Activated CD8-positive, alpha-beta T cell treated with anti-CD3 and anti-CD28 coated beads for 36 hours (primary cell): ENCODE measurements at regions of chr17 and their contacts with region 1.

Region 1: GRCh38 chr17:27879987-27880608 is 13.1 kb downstream of the LYRM9 start:
- DNase-seq: peak; percentile 83
- ATAC-seq: peak; percentile 87
- H3K4me3 Mint-ChIP-seq: no peak overlapping the region
- H3K27ac Mint-ChIP-seq: peak overlapping the region; percentile 55
- H3K4me1 Mint-ChIP-seq: peaks cover 19% of the 10 kb centered on the region
- H3K27me3 Mint-ChIP-seq: no peaks in the 10 kb centered on the region
- CTCF ChIP-seq: peak; percentile 86

Region 2: DNA sequence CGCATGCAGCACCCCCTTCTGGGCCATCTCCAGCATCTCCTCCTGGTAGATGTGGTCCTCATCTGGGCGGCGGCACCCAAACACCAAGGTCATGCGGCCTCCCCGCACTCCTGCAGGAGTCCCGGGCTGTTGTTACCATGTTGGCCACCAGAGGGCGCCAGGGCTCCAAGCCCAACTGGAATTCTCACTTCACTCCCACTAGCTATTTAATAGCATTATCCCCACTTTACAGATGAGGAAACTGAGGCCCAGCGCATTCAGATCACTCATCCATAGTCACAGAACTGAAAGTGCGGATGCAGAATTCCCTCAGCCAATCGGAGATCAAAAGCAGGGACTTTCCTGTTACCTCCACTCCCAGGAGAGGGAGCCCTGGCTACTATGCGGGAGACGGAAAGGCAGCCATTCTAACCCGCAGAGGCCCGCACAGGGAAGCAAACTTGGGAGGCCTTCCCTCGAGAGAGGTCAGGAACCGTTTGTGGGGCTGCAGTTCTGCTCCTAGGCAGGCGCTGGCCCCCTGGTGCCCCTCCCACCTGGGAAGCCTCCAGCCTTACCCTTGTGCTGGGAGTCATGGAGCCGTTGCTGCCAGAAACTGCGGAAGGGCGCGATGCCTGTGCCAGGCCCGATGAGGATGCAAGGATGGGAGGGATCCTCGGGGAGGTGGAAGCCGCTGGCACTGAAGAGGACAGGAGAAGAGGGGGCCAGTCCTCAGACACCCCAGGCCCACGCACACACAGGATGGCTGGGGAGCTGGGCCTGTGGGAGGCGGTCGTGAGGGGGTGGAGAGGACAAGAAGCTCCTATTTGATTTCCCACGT is 119.8 kb before region 1 on chr17:
- CTCF ChIA-PET with region 1: interaction called, 105 read pairs
- POLR2A ChIA-PET with region 1: no interaction called
- intact Hi-C with region 1: loop called (anchors 2 kb)
- DNase-seq: peak; percentile 82
- ATAC-seq: peak; percentile 68
- H3K4me3 Mint-ChIP-seq: no peak overlapping the region
- H3K27ac Mint-ChIP-seq: no peak overlapping the region
- H3K4me1 Mint-ChIP-seq: no peaks in the 10 kb centered on the region
- H3K27me3 Mint-ChIP-seq: no peaks in the 10 kb centered on the region
- CTCF ChIP-seq: peak; percentile 94

Region 3: DNA sequence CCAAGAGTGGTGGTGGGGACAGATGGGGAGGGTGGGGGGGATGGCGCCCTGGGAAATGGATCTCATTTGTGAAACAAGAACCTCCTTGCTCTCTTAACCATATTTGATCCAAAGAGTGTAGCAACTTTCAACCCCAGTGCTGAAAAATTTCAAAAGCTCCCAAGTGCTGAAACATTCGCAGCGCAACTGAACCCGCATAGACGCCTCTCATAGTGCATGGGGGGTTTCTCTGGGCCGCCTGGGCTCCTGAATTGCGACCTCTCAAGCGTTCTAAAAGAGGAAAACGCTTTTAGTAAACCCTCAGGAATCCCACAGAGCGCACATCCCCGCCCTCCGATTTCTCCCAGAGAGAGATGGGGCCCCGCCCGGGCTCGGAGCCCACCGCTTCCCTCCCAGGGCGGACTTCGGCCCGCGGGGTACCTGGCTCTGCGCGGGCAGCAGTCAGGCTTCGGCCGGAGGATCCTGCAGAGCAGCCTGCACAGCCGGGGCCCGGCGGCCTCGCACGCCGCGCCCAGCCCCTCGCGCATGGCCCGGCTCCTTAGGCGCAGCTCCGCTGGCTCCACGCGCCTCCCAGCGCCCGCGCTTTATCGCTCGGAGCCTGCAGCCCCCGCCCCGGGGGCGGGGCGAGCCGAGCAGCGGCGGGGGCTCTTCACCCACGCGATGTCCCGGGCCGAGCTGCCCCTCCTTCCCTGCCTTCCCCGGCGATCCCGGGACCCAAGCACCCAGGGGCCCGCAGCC is 86.8 kb before region 1 on chr17:
- CTCF ChIA-PET with region 1: interaction called, 601 read pairs
- POLR2A ChIA-PET with region 1: no interaction called
- intact Hi-C with region 1: no loop called
- DNase-seq: no peak
- ATAC-seq: peak; percentile 47
- H3K4me3 Mint-ChIP-seq: no peak overlapping the region
- H3K27ac Mint-ChIP-seq: no peak overlapping the region
- H3K4me1 Mint-ChIP-seq: peaks cover 4% of the 10 kb centered on the region
- H3K27me3 Mint-ChIP-seq: peaks cover 29% of the 10 kb centered on the region
- CTCF ChIP-seq: no peak

Region 4: GRCh38 chr17:27856676-27857432 is 23.2 kb before region 1 on chr17:
- CTCF ChIA-PET with region 1: interaction called, 12 read pairs
- POLR2A ChIA-PET with region 1: no interaction called
- intact Hi-C with region 1: no loop called
- DNase-seq: peak; percentile 24
- ATAC-seq: no peak
- H3K4me3 Mint-ChIP-seq: no peak overlapping the region
- H3K27ac Mint-ChIP-seq: peak overlapping the region; percentile 45
- H3K4me1 Mint-ChIP-seq: peaks cover 25% of the 10 kb centered on the region
- H3K27me3 Mint-ChIP-seq: peaks cover 11% of the 10 kb centered on the region
- CTCF ChIP-seq: no peak

Region 5: DNA sequence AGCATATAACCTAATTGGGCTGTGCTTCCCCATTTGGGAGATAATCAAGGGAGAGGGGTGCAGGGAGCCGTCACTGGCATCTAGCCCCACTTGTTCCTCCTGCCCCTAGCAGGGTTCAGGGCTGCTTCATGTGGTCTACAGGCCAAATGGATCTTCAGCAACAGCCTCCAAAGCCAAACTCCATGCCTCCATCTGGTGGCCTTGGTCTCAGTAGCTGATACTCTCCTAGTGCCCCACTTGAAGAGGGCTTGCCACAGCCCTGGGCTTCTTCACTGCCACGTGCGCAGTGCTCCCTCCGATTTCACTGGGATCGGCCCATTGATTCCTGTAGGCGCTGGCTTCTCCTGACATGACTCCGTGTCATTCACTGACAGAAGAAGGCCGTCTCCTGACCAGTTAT is 11.5 kb before region 1 on chr17:
- CTCF ChIA-PET with region 1: interaction called, 13 read pairs
- POLR2A ChIA-PET with region 1: no interaction called
- intact Hi-C with region 1: no loop called
- DNase-seq: no peak
- ATAC-seq: no peak
- H3K4me3 Mint-ChIP-seq: no peak overlapping the region
- H3K27ac Mint-ChIP-seq: no peak overlapping the region
- H3K4me1 Mint-ChIP-seq: no peaks in the 10 kb centered on the region
- H3K27me3 Mint-ChIP-seq: no peaks in the 10 kb centered on the region
- CTCF ChIP-seq: no peak